H1 (cell line): ENCODE measurements at regions of chr2 and their contacts with region 1.

Region 1: DNA sequence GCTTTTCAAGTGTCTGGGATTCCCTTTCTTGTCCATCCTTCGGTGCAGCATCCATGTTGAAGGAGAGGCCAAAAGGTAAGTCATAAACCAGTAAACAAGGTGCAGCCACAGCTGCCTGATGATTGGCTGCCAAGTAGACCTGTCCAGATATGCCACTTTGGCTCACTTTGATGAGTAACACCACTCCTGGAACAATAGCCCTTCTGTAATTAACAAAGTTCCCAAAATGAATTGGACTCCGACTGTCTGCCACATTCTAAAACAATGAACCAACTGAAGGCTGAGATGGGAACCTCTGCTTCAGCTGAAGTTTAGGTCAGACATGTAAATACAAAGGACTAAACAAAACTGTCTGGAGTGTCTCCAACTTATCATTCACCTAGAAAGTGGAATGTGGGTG is 82.2 kb upstream of the LGALSL start:
- DNase-seq: no peak
- H3K4me3 ChIP-seq: no peak overlapping the region
- H3K27ac ChIP-seq: no peak overlapping the region
- H3K4me1 ChIP-seq: no peaks in the 10 kb centered on the region
- H3K27me3 ChIP-seq: no peaks in the 10 kb centered on the region
- CTCF ChIP-seq: no peak
- EP300 ChIP-seq: no peak
- POLR2A ChIP-seq: no peak
- RAD21 ChIP-seq: no peak

Region 2: DNA sequence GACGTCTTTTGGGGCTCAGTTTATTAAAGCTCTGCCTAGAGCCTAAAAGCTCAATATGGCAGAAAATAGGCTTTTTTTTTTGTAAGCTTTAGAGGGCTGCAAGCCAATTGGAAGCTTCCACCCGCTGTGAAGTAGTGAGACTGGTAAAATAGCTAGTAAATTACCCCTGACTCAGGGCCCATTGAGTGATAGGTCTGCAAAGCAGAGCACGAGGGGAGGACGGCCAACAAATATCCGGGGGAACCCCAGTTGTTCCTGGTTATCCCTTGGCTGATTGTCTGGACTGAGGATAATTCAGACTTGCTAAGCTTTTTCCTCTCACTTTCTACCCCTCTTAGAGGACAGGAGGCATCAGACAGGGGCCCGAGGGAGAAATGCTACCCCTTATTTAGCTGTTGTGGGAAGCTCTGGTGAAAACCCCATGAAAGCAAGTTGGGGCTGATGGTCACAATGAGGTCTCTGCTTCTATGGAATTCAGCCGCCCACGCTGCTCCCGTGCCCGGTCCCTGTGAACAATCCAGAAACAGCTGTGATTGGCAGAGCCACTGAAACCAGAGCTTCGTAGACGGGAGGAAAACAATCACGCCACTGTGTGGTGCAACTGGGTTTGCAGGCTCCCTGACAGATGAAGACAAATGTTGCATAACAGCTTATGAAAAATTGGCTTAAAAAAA is 59.6 kb before region 1 on chr2:
- CTCF ChIA-PET with region 1: no interaction called
- POLR2A ChIA-PET with region 1: no interaction called
- DNase-seq: peak in 1 of 2 experiments; percentile 49
- H3K4me3 ChIP-seq: no peak overlapping the region
- H3K27ac ChIP-seq: no peak overlapping the region
- H3K4me1 ChIP-seq: peaks cover 3 to 10% (median 8%) of the 10 kb centered on the region in 4 experiments; a peak in 5 of 7 replicates
- H3K27me3 ChIP-seq: no peaks in the 10 kb centered on the region; a peak in 1 of 7 replicates
- CTCF ChIP-seq: peak in 2 of 3 experiments; percentile 5 to 32; a peak in 2 of 4 replicates
- EP300 ChIP-seq: no peak
- POLR2A ChIP-seq: no peak
- RAD21 ChIP-seq: peak; percentile 28 to 43; a peak in 2 of 4 replicates

Region 3: GRCh38 chr2:64359892-64360657 is 11.7 kb before region 1 on chr2:
- CTCF ChIA-PET with region 1: interaction called, 25 read pairs
- POLR2A ChIA-PET with region 1: no interaction called
- DNase-seq: no peak
- H3K4me3 ChIP-seq: no peak overlapping the region
- H3K27ac ChIP-seq: no peak overlapping the region
- H3K4me1 ChIP-seq: peaks cover 3 to 18% (median 7%) of the 10 kb centered on the region in 4 experiments; a peak in 6 of 7 replicates
- H3K27me3 ChIP-seq: 0 out of 7 replicates have a peak, but pooled peaks cover 0 to 4% (median 0%) of the 10 kb centered on the region in 4 experiments
- CTCF ChIP-seq: peak in 1 of 3 experiments; percentile 26; a peak in 1 of 4 replicates
- EP300 ChIP-seq: no peak
- POLR2A ChIP-seq: no peak
- RAD21 ChIP-seq: peak; percentile 9 to 24; a peak in 2 of 4 replicates